ENCODE measurements at regions of chr3 and their contacts with region 1.

Region 1: GRCh38 chr3:188947401-188948280 is 224.1 kb upstream of the TPRG1 start:
- DNase-seq: peak; percentile 91 to 97
- ATAC-seq: peak; percentile 88 to 95 (median 93)
- H3K4me3 ChIP-seq: peak overlapping the region in 9 of 10 donors; percentile 27 to 56 (median 52)
- H3K27ac ChIP-seq: peak overlapping the region; percentile 88 to 99 (median 97)
- H3K4me1 ChIP-seq: peaks cover 22 to 95% (median 45%) of the 10 kb centered on the region in 9 donors
- H3K27me3 ChIP-seq: no peaks in the 10 kb centered on the region
- CTCF ChIP-seq: peak in 8 of 9 donors; percentile 22 to 57 (median 36)

Region 2: DNA sequence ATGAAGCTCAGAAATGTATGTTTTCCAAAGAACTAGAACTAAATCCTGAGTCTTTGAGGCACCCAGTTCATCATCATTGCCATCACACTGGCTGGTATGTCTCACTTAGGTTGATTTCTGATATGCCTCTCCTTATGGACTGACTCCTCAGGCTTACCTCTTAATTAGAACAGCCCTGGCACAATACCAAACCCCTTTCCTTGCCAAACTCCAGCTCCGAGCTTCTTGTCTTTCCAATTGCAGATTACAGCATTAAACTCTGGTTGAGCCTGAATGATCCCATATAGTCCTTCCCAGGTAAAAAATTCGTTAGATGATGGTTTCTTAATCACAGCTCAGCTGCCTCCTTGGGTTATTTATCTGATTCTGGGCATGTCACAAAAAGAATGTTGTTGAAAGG is 1513.1 kb before region 1 on chr3:
- intact Hi-C with region 1: no loop called
- DNase-seq: no peak
- ATAC-seq: no peak
- H3K4me3 ChIP-seq: no peak overlapping the region
- H3K27ac ChIP-seq: no peak overlapping the region
- H3K4me1 ChIP-seq: no peaks in the 10 kb centered on the region
- H3K27me3 ChIP-seq: peaks cover 0 to 14% (median 4%) of the 10 kb centered on the region in 7 donors
- CTCF ChIP-seq: no peak

Region 3: GRCh38 chr3:188052169-188053030 is 895.2 kb before region 1 on chr3:
- intact Hi-C with region 1: loop called in 4 of 10 experiments (anchors 5 to 10 kb)
- DNase-seq: peak; percentile 81 to 89
- ATAC-seq: peak; percentile 96 to 98 (median 97)
- H3K4me3 ChIP-seq: peak overlapping the region in 6 of 10 donors; percentile 3 to 34 (median 23)
- H3K27ac ChIP-seq: peak overlapping the region; percentile 66 to 89 (median 76)
- H3K4me1 ChIP-seq: peaks cover 6 to 34% (median 21%) of the 10 kb centered on the region in 9 donors
- H3K27me3 ChIP-seq: no peaks in the 10 kb centered on the region
- CTCF ChIP-seq: peak in 8 of 9 donors; percentile 26 to 77 (median 56)

Region 4: GRCh38 chr3:188339410-188340295 is 608.0 kb before region 1 on chr3:
- intact Hi-C with region 1: loop called in 3 of 10 experiments (anchors 2 to 10 kb)
- DNase-seq: no peak
- ATAC-seq: no peak
- H3K4me3 ChIP-seq: no peak overlapping the region
- H3K27ac ChIP-seq: peak overlapping the region in 6 of 10 donors; percentile 2 to 33 (median 10)
- H3K4me1 ChIP-seq: peaks cover 0 to 55% (median 26%) of the 10 kb centered on the region in 9 donors
- H3K27me3 ChIP-seq: no peaks in the 10 kb centered on the region
- CTCF ChIP-seq: no peak

Region 5: GRCh38 chr3:188607805-188608315 is 339.8 kb before region 1 on chr3:
- intact Hi-C with region 1: loop called in 1 of 10 experiments (anchors 10 kb)
- DNase-seq: no peak
- ATAC-seq: no peak
- H3K4me3 ChIP-seq: no peak overlapping the region
- H3K27ac ChIP-seq: no peak overlapping the region
- H3K4me1 ChIP-seq: peaks cover 0 to 28% (median 8%) of the 10 kb centered on the region in 9 donors
- H3K27me3 ChIP-seq: no peaks in the 10 kb centered on the region
- CTCF ChIP-seq: no peak

Region 6: DNA sequence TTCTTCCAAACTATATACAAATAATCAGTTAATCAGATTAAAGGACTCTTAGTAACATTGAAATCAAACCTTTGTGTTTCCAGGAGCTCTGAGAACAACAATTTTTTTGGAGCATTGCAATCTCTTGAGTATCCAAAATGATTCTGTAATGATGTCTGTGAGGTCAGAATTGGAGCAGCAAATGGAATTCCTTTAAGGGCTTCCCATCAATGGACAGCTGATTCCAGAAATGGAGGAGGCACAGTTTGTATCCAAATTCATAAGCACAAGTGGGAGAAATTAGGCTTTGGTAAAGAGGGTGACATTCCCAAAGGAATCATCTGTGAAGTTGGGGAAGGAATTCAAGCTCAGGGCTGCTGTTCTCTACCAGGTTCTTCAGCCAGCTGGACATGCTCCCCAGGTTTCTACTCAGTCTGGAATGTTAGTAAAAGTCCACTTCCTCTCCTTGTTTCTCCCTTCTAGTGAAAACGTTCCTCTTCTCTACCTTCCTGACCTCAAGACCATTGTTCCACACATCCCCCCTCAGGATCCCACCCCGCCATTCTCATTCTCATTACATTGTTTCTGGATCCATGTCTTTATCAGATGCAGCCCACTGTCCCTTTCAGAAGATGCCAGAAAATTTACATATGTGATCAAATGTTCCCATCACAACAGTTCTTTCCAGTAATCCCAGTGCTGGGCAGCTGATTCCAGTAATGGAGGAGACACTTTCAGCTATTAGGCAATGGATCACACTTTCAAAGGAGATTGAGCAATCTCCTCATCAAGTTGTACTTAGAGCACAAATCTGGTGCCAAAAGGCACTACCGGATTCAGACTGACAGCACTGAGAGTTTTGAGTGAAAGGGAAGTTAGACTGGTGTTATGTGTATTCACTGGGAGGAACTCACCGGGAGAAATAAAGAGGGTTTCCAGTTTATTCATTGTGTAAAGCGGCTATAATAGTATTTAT is 167.2 kb before region 1 on chr3:
- intact Hi-C with region 1: loop called in 1 of 10 experiments (anchors 5 kb)
- DNase-seq: no peak
- ATAC-seq: peak; percentile 38 to 87 (median 72)
- H3K4me3 ChIP-seq: no peak overlapping the region
- H3K27ac ChIP-seq: peak overlapping the region in 7 of 10 donors; percentile 26 to 80 (median 65)
- H3K4me1 ChIP-seq: peaks cover 0 to 70% (median 35%) of the 10 kb centered on the region in 9 donors
- H3K27me3 ChIP-seq: no peaks in the 10 kb centered on the region
- CTCF ChIP-seq: no peak

Measured in heart right ventricle (tissue), 16 donors.